Left ventricle myocardium superior (tissue), 1 donor: ENCODE measurements at regions of chr12 and their contacts with region 1.

Region 1: GRCh38 chr12:122471324-122472226 is 29.2 kb downstream of the ZCCHC8 start:
- DNase-seq: no peak
- ATAC-seq: peak; percentile 60

Region 2: DNA sequence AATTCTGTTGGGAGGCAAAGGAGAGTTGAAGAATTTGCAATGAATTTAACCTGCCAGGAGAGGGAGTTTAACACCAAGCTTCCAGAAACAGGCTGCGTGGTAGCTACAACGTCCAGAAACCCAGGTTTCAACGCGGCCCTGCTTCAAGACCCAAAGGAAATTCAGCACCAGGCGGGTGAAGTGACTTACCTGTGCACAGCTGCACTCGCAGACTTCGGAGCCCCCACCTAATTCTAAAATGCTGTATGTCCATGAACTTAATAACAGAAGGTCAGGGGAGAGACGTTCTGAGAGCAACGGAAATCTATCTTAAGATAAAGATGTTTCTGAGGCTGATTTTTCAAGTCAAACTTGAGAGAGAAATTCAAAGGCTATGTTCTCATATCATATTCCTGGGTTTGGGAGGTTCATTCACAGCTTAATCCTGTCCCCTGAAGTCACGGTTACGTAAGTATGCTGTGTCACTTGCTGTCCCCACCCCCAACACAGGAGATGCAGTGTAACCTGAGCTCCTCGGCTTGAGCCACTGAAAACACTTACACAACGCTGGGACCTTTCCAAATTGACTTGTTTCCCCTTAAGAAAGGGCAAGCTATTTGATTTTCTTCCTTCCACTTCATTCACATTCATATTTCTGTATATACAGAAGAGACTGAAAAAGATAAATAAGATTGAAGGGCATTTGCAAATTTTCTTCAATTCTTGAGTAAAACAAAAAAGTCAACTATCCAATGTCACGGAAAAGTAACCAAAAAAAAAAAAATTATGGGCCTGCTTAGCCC is 71.8 kb before region 1 on chr12:
- intact Hi-C with region 1: loop called (anchors 2 kb)
- DNase-seq: peak; percentile 52
- ATAC-seq: peak; percentile 91